Esophagus squamous epithelium (tissue), 5 donors: ENCODE measurements at regions of chr18 and their contacts with region 1.

Region 1: GRCh38 chr18:54119524-54120019 is 104.9 kb downstream of the MBD2 start:
- DNase-seq: no peak
- H3K4me3 ChIP-seq: no peak overlapping the region
- H3K27ac ChIP-seq: no peak overlapping the region
- H3K4me1 ChIP-seq: peaks cover 0 to 5% (median 3%) of the 10 kb centered on the region in 3 donors
- H3K27me3 ChIP-seq: no peaks in the 10 kb centered on the region
- CTCF ChIP-seq: peak; percentile 43 to 80 (median 63)
- POLR2A ChIP-seq: no peak

Region 2: DNA sequence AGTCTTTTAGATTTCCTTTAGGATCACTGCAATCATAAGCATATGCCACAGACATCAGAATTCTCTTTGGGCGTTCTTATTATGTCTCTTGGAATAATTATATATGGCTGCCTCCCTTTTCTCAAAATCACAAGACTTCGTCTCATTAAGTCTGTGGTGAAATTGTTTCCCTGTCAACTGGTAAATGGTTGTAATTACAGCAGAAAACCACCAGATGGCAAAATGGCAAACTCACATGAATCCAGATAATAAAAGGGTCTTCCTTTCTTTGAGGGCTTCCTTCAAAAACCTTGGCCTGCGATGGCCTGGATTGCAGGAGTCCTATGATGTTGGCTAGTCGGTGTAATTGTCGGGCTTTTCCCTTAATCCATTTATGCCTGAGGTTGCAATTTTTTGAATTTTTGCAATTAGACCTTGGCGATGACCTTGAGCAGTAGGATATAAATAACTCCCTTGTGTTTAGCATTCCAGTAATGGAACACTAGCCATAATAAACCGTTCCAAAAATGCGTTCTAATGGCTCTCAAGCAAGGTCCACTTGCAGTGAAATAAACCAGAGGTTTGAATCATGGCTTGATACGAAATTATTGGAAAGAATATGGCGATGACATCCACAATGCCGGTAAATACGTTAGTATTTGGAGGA is 551.5 kb before region 1 on chr18:
- intact Hi-C with region 1: loop called (anchors 5 kb)
- DNase-seq: no peak
- H3K4me3 ChIP-seq: no peak overlapping the region
- H3K27ac ChIP-seq: no peak overlapping the region
- H3K4me1 ChIP-seq: no peaks in the 10 kb centered on the region
- H3K27me3 ChIP-seq: no peaks in the 10 kb centered on the region
- CTCF ChIP-seq: peak; percentile 25 to 59 (median 41)
- POLR2A ChIP-seq: no peak

Region 3: GRCh38 chr18:53817976-53818950 is 301.3 kb before region 1 on chr18:
- intact Hi-C with region 1: no loop called
- DNase-seq: no peak
- H3K4me3 ChIP-seq: no peak overlapping the region
- H3K27ac ChIP-seq: no peak overlapping the region
- H3K4me1 ChIP-seq: no peaks in the 10 kb centered on the region
- H3K27me3 ChIP-seq: no peaks in the 10 kb centered on the region
- CTCF ChIP-seq: no peak
- POLR2A ChIP-seq: no peak

Region 4: GRCh38 chr18:53909668-53910067 is 209.9 kb before region 1 on chr18:
- intact Hi-C with region 1: loop called (anchors 10 kb)
- DNase-seq: no peak
- H3K4me3 ChIP-seq: no peak overlapping the region
- H3K27ac ChIP-seq: no peak overlapping the region
- H3K4me1 ChIP-seq: no peaks in the 10 kb centered on the region
- H3K27me3 ChIP-seq: no peaks in the 10 kb centered on the region
- CTCF ChIP-seq: peak in 4 of 6 experiments; percentile 6 to 50 (median 28)
- POLR2A ChIP-seq: no peak